PC-9 (cell line): ENCODE measurements at regions of chr13 and their contacts with region 1.

Region 1: GRCh38 chr13:40503966-40504591 is 162.4 kb downstream of the FOXO1 start:
- DNase-seq: peak; percentile 42 to 53
- H3K4me3 ChIP-seq: no peak overlapping the region
- H3K27ac ChIP-seq: no peak overlapping the region
- H3K4me1 ChIP-seq: 0 out of 2 replicates have a peak, but pooled peaks cover 4% of the 10 kb centered on the region
- H3K27me3 ChIP-seq: no peaks in the 10 kb centered on the region
- CTCF ChIP-seq: no peak

Region 2: GRCh38 chr13:40388617-40389016 is 115.5 kb before region 1 on chr13:
- CTCF ChIA-PET with region 1: no interaction called
- POLR2A ChIA-PET with region 1: no interaction called
- intact Hi-C with region 1: no loop called
- DNase-seq: no peak
- H3K4me3 ChIP-seq: no peak overlapping the region
- H3K27ac ChIP-seq: no peak overlapping the region
- H3K4me1 ChIP-seq: no peaks in the 10 kb centered on the region
- H3K27me3 ChIP-seq: no peaks in the 10 kb centered on the region
- CTCF ChIP-seq: no peak

Region 3: DNA sequence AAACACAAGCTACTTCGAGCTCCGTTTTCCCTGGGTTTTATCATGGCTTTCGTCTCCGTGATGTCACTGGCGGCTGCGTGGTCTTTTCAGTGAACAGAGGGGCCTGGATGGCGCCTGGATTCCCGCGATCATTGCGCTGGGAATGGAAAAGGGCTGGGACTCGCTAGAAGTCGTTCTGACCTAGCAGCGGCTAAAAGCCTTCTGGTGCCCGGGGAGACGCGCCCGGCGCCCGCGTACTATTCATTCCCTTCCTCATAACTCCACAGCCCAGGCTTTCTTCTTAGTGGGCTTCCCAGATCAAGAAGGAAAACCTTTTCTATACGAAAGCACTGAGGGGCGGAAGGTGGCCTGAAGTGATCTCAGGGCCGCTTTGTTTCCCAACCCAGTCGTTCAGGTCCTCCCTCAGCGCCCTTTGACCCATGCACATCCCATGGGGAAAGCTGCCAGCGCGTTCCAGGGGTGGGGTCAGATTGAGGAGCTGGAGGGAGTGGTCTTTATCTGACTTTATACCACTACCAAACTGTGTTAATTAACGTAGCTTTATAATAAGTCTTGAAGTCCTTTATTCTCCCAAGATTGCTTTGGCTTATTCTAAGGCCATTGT is 418.5 kb after region 1 on chr13:
- CTCF ChIA-PET with region 1: no interaction called
- POLR2A ChIA-PET with region 1: interaction called, 14 read pairs
- intact Hi-C with region 1: no loop called
- DNase-seq: no peak
- H3K4me3 ChIP-seq: no peak overlapping the region
- H3K27ac ChIP-seq: no peak overlapping the region
- H3K4me1 ChIP-seq: 0 out of 2 replicates have a peak, but pooled peaks cover 4% of the 10 kb centered on the region
- H3K27me3 ChIP-seq: no peaks in the 10 kb centered on the region
- CTCF ChIP-seq: no peak